Tibial artery (tissue), 4 donors: ENCODE measurements at regions of chr7 and their contacts with region 1.

Region 1: GRCh38 chr7:44921607-44922359 is 36.5 kb upstream of the PURB start:
- DNase-seq: peak; percentile 89 to 94
- H3K4me3 ChIP-seq: no peak overlapping the region
- H3K27ac ChIP-seq: no peak overlapping the region
- H3K4me1 ChIP-seq: peaks cover 0 to 5% (median 2%) of the 10 kb centered on the region in 4 donors
- H3K27me3 ChIP-seq: no peaks in the 10 kb centered on the region
- CTCF ChIP-seq: peak; percentile 72 to 79

Region 2: DNA sequence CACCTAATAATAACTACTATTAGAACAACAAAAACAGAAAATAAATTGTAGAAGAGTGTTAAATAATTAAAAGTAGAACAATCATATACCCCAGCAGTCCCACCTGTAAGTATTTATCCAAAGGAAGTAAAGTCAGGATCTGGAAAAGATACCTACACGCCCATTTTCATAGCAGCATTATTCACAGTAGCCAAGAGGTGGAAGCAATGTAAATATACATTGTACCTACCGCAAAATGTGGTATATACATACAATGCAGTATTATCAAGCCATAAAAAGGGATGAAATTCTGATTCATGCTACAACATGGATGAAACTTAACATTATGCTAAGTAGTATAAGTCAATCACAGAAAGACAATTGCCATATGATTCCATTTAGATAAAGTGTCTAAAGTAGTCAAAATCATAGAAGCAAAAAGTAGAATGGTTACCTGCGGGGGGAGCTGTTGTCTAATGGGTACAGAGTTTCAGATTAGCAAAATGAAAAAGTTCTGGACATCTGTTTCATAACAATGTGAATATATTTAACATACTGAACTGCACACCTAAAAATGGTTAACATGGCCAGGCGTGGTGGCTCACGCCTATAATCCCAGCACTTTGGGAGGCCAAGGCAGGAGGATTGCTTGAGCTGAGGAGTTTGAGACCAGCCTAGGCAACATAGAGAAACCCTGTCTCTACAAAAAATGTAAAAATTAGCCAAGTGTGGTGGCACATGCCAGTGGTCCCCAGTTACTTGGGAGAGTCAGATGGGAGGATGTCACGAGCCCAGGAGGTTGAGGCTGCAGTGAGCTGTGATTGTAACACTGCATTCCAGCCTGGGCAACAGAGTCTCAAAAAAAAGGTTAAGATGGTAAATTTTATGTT is 333.7 kb before region 1 on chr7:
- intact Hi-C with region 1: loop called (anchors 5 kb)
- DNase-seq: peak in 1 of 2 donors; percentile 51
- H3K4me3 ChIP-seq: no peak overlapping the region
- H3K27ac ChIP-seq: no peak overlapping the region
- H3K4me1 ChIP-seq: peaks cover 0 to 2% (median under 1%) of the 10 kb centered on the region in 4 donors
- H3K27me3 ChIP-seq: no peaks in the 10 kb centered on the region
- CTCF ChIP-seq: peak; percentile 59 to 62

Region 3: GRCh38 chr7:44858161-44858560 is 63.6 kb before region 1 on chr7:
- intact Hi-C with region 1: loop called (anchors 2 kb)
- DNase-seq: no peak
- H3K4me3 ChIP-seq: no peak overlapping the region
- H3K27ac ChIP-seq: no peak overlapping the region
- H3K4me1 ChIP-seq: peaks cover 0 to 4% (median 0%) of the 10 kb centered on the region in 4 donors
- H3K27me3 ChIP-seq: no peaks in the 10 kb centered on the region
- CTCF ChIP-seq: no peak